B cell (primary cell): ENCODE measurements at regions of chr12 and their contacts with region 1.

Region 1: DNA sequence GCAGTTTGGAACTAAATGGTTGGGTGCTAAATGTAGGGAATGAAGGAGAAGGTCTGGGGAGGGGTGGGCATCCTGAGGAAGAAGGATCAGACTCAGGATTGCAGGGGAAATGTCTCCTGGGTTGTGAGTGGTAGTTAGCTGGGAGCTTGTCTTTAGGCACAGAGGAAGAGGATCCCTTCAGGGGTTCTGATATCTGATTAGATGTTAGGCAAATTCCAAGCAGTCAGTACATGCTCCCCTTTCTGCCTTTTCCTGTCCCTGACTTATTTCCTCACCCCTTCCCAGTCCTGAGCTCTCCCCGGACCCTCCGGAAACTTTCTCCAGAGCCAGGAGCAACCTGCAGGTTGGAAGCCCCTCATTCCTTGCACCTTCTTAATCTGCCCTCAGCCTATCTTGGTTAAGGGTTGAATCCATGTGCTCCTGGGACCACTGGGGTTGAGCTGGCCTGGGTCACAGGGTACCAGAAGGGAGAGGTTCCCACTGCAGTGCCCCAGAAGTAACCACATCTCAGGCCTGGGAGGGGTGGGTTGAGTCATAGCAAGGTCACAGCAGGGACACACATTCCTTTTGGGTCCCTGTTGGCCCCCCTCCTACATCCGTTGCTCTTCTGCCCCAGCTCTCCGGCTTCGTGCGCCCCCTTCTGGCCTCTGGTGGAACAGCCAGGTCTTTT is 1.6 kb downstream of the IGFBP6 start:
- DNase-seq: peak; percentile 87
- ATAC-seq: peak; percentile 68
- H3K4me3 ChIP-seq: no peak overlapping the region
- H3K4me3 Mint-ChIP-seq: peak overlapping the region; percentile 90
- H3K27ac ChIP-seq: no peak overlapping the region
- H3K27ac Mint-ChIP-seq: peak overlapping the region; percentile 59
- H3K4me1 ChIP-seq: peaks cover 37 to 46% of the 10 kb centered on the region in 2 donors
- H3K4me1 Mint-ChIP-seq: peaks cover 42% of the 10 kb centered on the region
- H3K27me3 ChIP-seq: peaks cover 0 to 18% (median 7%) of the 10 kb centered on the region in 4 experiments
- H3K27me3 Mint-ChIP-seq: peaks cover 14% of the 10 kb centered on the region
- CTCF ChIP-seq: peak; percentile 97

Region 2: DNA sequence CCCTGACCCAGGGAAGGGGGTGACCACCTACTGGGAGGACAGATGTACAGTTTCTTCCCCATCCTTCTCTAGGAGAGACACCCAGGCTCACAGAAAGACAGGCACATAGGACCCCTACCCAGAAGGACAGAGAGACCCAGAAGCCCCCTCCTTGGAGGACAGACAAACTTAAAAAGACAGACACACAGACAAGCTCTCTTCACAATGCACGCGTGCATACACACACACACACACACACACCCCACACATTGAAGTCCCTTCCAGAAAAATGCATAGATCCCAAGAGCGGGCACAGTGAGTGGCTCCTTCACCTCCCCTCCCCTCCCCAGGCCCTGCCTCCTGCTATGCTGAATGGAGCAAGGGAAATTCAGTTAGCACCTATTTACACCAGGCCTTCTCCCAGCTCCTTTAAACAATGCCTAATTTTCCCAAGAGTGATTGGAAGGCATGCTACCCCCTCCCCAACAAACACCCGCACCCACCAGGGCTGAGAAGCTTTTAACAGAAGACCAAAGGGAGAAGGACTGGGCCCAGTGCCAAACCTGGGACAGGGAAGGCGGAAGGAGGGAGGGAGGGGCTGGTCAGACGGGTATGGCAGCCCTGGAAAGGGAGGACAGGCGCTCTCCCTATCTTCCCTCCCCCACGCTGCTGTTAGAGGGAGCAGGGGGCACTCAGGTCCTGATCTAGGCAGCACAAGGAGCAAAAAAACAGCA is 192.2 kb before region 1 on chr12:
- CTCF ChIA-PET with region 1: no interaction called
- POLR2A ChIA-PET with region 1: no interaction called
- intact Hi-C with region 1: no loop called
- DNase-seq: no peak
- ATAC-seq: no peak
- H3K4me3 ChIP-seq: no peak overlapping the region
- H3K4me3 Mint-ChIP-seq: no peak overlapping the region
- H3K27ac ChIP-seq: no peak overlapping the region
- H3K27ac Mint-ChIP-seq: no peak overlapping the region
- H3K4me1 ChIP-seq: peaks cover 5 to 10% of the 10 kb centered on the region in 2 donors
- H3K4me1 Mint-ChIP-seq: peaks cover 3% of the 10 kb centered on the region
- H3K27me3 ChIP-seq: peaks cover 0 to 13% (median 2%) of the 10 kb centered on the region in 4 experiments
- H3K27me3 Mint-ChIP-seq: peaks cover 17% of the 10 kb centered on the region
- CTCF ChIP-seq: no peak

Region 3: DNA sequence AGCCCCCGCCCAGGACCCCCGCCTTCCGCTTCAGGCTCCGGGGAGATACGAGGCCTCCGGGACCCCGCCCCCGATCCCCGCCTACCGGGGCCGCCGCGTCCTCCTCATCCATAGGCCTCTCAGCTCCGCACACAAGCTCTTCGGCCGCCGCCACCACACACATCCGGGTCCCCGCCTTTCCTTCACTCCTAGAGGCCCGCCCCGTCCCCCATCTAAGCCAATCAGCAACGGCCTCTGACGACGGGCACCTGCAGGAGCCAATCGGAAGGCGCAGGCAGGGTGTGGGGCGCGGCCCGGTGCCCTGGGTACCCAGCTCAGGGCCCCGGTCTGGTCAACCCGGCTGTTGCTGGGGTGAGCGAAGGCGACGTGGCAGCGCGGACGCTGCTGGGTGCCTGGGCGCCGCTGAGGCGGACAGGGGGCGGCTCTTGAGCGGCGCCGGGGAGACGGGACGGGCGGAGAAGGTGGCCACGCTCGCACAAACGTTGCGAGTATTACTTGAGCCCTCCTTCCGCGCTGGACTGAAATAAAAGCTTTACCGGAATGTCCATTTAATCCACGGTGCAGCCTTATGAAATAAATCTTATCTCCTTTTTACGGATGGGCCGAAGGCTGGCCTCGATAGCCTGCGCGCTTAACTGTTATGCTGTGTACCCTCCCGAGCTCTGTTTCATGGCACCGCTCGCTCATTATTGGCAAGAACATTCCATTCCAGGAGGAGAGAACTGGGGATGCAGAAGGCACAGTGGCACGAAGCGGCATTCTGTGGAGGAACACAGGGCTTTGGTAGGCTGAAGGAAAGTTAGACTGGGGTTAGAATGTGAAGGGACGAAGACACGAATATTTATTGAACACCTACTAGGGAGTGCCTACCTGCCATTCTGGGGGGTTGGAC is 19.6 kb before region 1 on chr12 and contains the start of gene SPRYD3:
- CTCF ChIA-PET with region 1: interaction called, 344 read pairs
- POLR2A ChIA-PET with region 1: interaction called, 11 read pairs
- intact Hi-C with region 1: loop called (anchors 1 kb)
- DNase-seq: peak; percentile 97
- ATAC-seq: peak; percentile 98
- H3K4me3 ChIP-seq: peak within 1 kb of the TSS; percentile 65 to 98 (median 80)
- H3K4me3 Mint-ChIP-seq: peak within 1 kb of the TSS; percentile 95
- H3K27ac ChIP-seq: peak within 1 kb of the TSS; percentile 51 to 75
- H3K27ac Mint-ChIP-seq: peak within 1 kb of the TSS; percentile 95
- H3K4me1 ChIP-seq: peaks cover 10 to 17% of the 10 kb centered on the region in 2 donors
- H3K4me1 Mint-ChIP-seq: peaks cover 28% of the 10 kb centered on the region
- H3K27me3 ChIP-seq: peaks cover 0 to 8% (median 0%) of the 10 kb centered on the region in 4 experiments
- H3K27me3 Mint-ChIP-seq: peaks cover 4% of the 10 kb centered on the region
- CTCF ChIP-seq: no peak
- total RNA-seq, gene SPRYD3: 39.8 and 43.3 TPM in 2 replicates

Region 4: DNA sequence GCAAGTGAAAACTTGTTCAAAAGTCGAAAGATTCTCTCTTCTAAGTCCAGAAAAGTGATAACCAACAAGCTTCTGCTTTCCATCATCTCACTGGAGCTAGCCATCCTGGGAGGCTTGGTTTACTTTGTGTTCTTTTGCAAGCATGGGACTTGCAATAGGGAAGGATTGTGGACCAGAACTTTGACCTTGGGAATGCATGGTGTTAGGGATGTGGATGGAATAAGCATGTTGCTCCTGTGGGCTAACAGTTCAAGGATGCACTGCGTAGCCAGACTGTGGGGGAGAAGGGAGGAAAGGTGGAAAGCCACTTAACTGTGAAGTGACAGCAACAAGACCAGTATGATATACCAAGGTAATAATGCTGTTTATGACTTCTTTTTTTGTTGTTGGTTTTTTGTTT is 32.7 kb after region 1 on chr12:
- CTCF ChIA-PET with region 1: no interaction called
- POLR2A ChIA-PET with region 1: no interaction called
- intact Hi-C with region 1: no loop called
- DNase-seq: no peak
- ATAC-seq: no peak
- H3K4me3 ChIP-seq: no peak overlapping the region
- H3K4me3 Mint-ChIP-seq: no peak overlapping the region
- H3K27ac ChIP-seq: no peak overlapping the region
- H3K27ac Mint-ChIP-seq: no peak overlapping the region
- H3K4me1 ChIP-seq: no peaks in the 10 kb centered on the region
- H3K4me1 Mint-ChIP-seq: no peaks in the 10 kb centered on the region
- H3K27me3 ChIP-seq: peaks cover 0 to 10% (median 0%) of the 10 kb centered on the region in 4 experiments
- H3K27me3 Mint-ChIP-seq: peaks cover 16% of the 10 kb centered on the region
- CTCF ChIP-seq: no peak

Region 5: DNA sequence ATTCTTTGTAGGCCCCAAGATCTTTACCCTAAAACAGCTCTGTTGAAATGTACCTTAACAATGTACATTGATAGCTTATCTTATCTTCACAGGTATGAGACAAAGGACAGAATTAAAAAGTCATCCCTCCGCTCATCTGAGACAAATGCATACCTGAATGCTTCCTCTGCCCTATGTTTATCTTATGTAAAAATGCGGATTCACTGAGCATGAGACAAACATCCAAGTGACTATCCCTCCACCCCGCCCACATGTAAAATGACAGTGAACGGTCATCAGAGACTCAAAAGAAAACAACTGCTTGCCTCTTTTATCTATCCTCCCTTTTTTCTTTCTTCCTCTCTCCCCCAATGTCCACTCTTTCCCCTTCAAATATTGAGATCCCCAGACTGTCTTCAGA is 44.2 kb after region 1 on chr12:
- CTCF ChIA-PET with region 1: no interaction called
- POLR2A ChIA-PET with region 1: no interaction called
- intact Hi-C with region 1: no loop called
- DNase-seq: no peak
- ATAC-seq: no peak
- H3K4me3 ChIP-seq: no peak overlapping the region
- H3K4me3 Mint-ChIP-seq: no peak overlapping the region
- H3K27ac ChIP-seq: no peak overlapping the region
- H3K27ac Mint-ChIP-seq: no peak overlapping the region
- H3K4me1 ChIP-seq: no peaks in the 10 kb centered on the region
- H3K4me1 Mint-ChIP-seq: no peaks in the 10 kb centered on the region
- H3K27me3 ChIP-seq: no peaks in the 10 kb centered on the region
- H3K27me3 Mint-ChIP-seq: peaks cover 9% of the 10 kb centered on the region
- CTCF ChIP-seq: no peak